Ascending aorta (tissue), 2 donors: ENCODE measurements at regions of chr1 and their contacts with region 1.

Region 1: GRCh38 chr1:38138498-38139233 is 92.1 kb upstream of the POU3F1 start:
- DNase-seq: peak; percentile 48 to 95
- H3K4me3 ChIP-seq: peak overlapping the region in 1 of 2 donors; percentile 36
- H3K27ac ChIP-seq: peak overlapping the region; percentile 63 to 68
- H3K4me1 ChIP-seq: peaks cover 0 to 21% of the 10 kb centered on the region in 2 donors
- H3K27me3 ChIP-seq: no peaks in the 10 kb centered on the region
- CTCF ChIP-seq: peak; percentile 41 to 43 (median 42)

Region 2: DNA sequence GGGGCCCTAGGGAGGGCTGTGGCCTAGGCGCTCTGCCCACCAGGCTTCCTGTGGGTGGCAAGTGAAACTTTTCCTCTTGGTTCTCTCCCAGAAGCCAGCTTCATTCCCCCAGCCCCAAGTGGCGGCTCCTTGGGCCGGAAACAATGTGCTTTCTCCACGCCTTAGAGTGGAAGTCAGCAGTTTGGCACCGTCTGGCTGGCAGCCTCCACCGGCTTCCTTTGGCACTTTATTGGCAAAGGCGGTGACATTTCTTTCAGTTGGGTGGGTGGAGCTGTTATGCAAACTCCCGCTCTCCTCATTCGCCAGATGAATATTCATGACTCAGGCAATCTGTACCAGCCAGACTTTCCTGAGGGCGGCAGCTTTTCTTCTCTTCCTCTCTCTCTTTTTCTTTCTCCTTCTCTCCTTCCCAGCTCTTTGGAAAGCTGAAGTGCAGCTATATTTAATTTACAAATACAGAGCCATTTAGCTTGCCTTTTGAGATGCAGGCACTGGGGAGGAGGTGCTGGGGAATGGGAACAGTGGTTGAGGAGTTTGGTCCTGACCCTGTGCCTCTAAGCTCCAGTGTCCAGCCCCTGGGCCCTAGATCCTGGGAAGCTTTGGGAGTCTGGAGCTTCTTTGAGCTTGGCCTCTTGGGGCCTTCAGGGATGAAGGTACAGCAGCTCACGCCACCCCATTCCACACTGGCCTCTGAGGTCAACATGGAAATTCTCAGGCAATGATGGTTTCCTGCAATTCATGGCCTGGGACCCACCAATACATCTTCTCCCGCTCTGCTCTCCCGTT is 24.2 kb before region 1 on chr1:
- intact Hi-C with region 1: loop called (anchors 2 kb)
- DNase-seq: peak; percentile 27 to 86
- H3K4me3 ChIP-seq: no peak overlapping the region
- H3K27ac ChIP-seq: peak overlapping the region; percentile 56 to 85
- H3K4me1 ChIP-seq: peaks cover 4 to 10% of the 10 kb centered on the region in 2 donors
- H3K27me3 ChIP-seq: no peaks in the 10 kb centered on the region
- CTCF ChIP-seq: no peak

Region 3: DNA sequence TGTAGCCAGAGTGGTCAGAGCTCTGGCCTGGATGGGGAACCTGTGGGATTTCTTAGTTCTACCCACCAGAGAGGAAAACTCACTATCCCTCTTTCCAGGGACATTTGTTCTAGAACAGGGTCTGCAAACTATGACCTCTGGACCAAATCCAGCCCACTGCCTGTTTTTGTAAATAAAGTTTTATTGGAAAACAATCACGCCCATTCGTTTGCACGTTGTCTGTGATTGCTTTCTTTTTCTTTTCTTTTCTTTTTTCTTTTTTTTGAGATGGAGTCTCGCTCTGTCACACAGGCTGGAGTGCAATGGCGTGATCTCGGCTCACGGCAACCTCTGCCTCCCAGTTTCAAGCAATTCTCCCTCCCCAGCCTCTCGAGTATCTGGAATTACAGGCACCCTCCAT is 24.2 kb after region 1 on chr1:
- intact Hi-C with region 1: no loop called
- DNase-seq: no peak
- H3K4me3 ChIP-seq: no peak overlapping the region
- H3K27ac ChIP-seq: no peak overlapping the region
- H3K4me1 ChIP-seq: no peaks in the 10 kb centered on the region
- H3K27me3 ChIP-seq: no peaks in the 10 kb centered on the region
- CTCF ChIP-seq: no peak

Region 4: GRCh38 chr1:38297842-38298241 is 159.2 kb after region 1 on chr1:
- intact Hi-C with region 1: no loop called
- DNase-seq: no peak
- H3K4me3 ChIP-seq: no peak overlapping the region
- H3K27ac ChIP-seq: no peak overlapping the region
- H3K4me1 ChIP-seq: no peaks in the 10 kb centered on the region
- H3K27me3 ChIP-seq: no peaks in the 10 kb centered on the region
- CTCF ChIP-seq: no peak